ENCODE measurements at regions of chr1 and their contacts with region 1.

Region 1: DNA sequence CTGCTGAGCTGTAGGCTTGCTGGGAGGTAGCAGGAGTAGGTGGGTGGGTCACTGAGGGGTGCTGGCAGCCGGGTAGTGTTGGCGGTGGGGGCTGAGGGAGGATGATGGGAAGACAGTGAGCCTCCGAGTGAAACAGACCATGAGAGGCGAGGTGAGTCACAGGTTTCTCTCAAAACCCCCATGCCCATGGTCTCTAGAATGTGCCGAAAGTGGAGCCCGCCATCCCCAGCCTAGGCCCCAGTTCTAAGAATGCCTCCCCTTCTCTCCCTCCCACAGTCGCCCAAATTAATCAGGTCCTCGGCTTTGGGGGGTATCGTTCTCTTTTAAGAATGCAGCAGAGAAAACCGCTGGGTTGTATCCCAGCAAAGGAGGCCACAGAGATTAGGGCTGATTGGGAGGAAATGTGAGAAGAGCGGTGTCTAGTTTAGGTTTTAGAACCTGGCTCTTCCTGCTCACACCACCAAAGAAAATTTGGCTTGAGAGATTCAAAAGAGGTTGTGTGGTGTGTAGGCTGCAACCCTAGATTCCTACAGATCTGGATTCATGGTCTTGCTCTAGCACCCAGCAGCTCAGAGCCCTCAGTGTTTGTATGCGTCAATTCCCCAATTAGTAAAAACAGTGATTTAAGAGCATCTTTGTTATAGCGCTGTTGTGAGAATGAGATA is 27.7 kb upstream of the IL19 start:
- DNase-seq: no peak
- ATAC-seq: peak; percentile 51
- H3K4me3 Mint-ChIP-seq: peak overlapping the region; percentile 2
- H3K27ac Mint-ChIP-seq: peak overlapping the region; percentile 86
- H3K4me1 Mint-ChIP-seq: peaks cover 68% of the 10 kb centered on the region
- H3K27me3 Mint-ChIP-seq: no peaks in the 10 kb centered on the region
- CTCF ChIP-seq: no peak

Region 2: GRCh38 chr1:206753141-206753540 is 10.3 kb after region 1 on chr1:
- CTCF ChIA-PET with region 1: interaction called, 3 read pairs
- POLR2A ChIA-PET with region 1: interaction called, 3 read pairs
- intact Hi-C with region 1: loop called (anchors 2 kb)
- DNase-seq: no peak
- ATAC-seq: no peak
- H3K4me3 Mint-ChIP-seq: no peak overlapping the region
- H3K27ac Mint-ChIP-seq: no peak overlapping the region
- H3K4me1 Mint-ChIP-seq: peaks cover 6% of the 10 kb centered on the region
- H3K27me3 Mint-ChIP-seq: no peaks in the 10 kb centered on the region
- CTCF ChIP-seq: no peak

Region 3: DNA sequence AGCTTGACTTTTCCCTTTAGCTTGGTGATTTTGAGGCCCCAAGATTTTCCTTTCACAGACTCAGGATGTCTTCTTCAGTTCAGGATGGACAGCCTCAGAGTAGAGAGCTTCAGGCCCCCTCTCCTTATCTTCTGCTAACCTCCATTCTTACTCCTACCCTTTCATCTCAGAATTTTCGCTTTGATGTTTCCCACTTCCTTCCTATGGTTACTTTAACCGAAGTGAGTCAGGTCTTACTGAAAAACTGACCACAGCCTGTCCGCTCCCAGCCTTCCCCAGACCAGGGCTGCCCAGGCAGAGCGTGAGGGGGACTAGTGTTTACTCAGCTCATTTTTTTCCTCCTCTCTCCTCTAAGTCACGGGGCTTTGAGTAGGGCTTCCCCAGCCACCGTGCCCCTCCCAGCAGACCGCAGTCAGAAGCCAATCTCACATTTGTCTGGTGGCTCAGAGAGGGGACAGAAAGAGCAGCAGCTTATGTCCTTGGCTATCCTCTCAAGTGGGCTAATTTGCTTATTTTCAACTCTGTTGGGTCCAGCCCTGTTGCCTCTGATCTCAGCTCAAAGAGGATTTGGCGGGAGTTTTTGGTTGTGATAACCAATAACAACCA is 23.5 kb after region 1 on chr1:
- CTCF ChIA-PET with region 1: interaction called, 8 read pairs
- POLR2A ChIA-PET with region 1: interaction called, 14 read pairs
- intact Hi-C with region 1: loop called (anchors 1 kb)
- DNase-seq: no peak
- ATAC-seq: peak; percentile 64
- H3K4me3 Mint-ChIP-seq: peak overlapping the region; percentile 42
- H3K27ac Mint-ChIP-seq: peak overlapping the region; percentile 73
- H3K4me1 Mint-ChIP-seq: peaks cover 51% of the 10 kb centered on the region
- H3K27me3 Mint-ChIP-seq: no peaks in the 10 kb centered on the region
- CTCF ChIP-seq: no peak

Measured in activated B cell treated with CpG ODN at 0.5 μM for 24 hours (primary cell).